Posterior vena cava (tissue), 2 donors: ENCODE measurements at regions of chr10 and their contacts with region 1.

Region 1: GRCh38 chr10:102009801-102010425 is 46.1 kb downstream of the ARMH3 start:
- DNase-seq: no peak

Region 2: DNA sequence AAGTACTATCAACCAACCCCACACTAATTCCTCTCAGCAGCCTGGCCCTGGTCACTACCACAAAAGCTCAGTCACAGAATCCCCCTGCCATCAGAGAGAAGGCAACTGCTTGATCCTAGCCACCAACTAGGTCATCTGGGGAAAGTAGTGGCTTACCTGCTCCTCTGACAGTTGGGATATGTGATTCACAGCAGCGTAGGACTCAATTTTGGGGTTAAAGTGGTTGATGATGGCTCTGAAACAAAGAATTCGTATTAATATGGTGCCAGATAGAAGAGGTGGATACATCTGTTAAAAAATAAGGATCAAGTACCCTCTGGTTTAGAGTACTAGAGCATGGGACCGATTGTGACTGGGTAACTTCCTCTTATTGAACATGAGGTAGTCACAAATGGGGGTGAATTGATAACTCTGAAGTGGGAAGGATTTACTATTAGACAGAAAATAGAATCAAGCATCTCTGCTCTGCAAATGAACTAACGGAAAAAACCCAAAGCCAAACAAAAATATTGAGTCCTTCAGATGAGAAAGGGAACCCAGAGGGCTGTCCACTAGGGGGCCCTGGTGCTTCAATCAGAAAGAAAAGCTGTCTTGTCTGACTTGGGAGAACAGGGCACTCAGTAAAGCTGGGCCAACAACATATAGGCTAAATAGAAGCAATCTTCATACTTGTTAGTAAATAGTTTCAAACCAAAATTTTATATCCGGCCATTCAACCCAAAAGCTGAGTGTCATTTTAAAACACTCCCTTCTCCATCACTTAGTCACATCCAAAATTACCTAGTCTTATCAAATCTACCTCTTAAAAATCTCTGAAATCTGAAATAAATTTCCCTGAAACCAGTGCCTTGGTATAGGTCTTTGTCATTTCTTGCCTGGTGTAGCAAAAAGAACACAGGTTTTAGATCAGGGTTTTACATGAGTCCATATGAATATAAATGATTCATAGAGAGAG is 120.4 kb before region 1 on chr10:
- intact Hi-C with region 1: loop called (anchors 2 to 5 kb)
- DNase-seq: peak; percentile 88